Activated CD8-positive, alpha-beta T cell treated with anti-CD3 and anti-CD28 coated beads for 36 hours (primary cell): ENCODE measurements at regions of chr17 and their contacts with region 1.

Region 1: GRCh38 chr17:28644985-28645939 is at the start of gene BLTP2:
- DNase-seq: peak; percentile 96
- ATAC-seq: peak; percentile 99
- H3K4me3 Mint-ChIP-seq: peak within 1 kb of the TSS; percentile 86
- H3K27ac Mint-ChIP-seq: peak within 1 kb of the TSS; percentile 84
- H3K4me1 Mint-ChIP-seq: peaks cover 40% of the 10 kb centered on the region
- H3K27me3 Mint-ChIP-seq: no peaks in the 10 kb centered on the region
- CTCF ChIP-seq: no peak
- total RNA-seq, gene BLTP2: 137 to 140 TPM

Region 2: DNA sequence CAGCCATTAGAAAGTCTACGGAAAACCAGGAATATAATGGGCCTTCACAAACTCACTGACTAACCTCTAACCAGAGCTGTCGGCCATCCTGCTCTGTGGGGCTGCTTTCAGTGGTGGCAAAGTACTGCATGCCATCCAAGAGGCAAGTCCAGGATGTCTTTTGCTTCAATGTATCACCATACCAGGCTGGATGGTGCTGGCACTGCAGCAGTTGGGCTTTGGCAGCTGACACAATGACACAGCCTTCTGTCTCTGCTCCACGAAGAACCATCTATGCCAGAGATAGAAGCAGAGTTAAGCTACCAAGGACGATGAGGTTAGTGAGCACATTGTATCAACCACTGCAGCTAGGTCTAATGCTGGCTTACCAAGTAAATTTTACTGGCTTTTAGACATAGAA is 21.6 kb before region 1 on chr17:
- CTCF ChIA-PET with region 1: interaction called, 11 read pairs
- POLR2A ChIA-PET with region 1: interaction called, 5 read pairs
- intact Hi-C with region 1: no loop called
- DNase-seq: no peak
- ATAC-seq: no peak
- H3K4me3 Mint-ChIP-seq: no peak overlapping the region
- H3K27ac Mint-ChIP-seq: no peak overlapping the region
- H3K4me1 Mint-ChIP-seq: peaks cover 3% of the 10 kb centered on the region
- H3K27me3 Mint-ChIP-seq: no peaks in the 10 kb centered on the region
- CTCF ChIP-seq: no peak

Region 3: DNA sequence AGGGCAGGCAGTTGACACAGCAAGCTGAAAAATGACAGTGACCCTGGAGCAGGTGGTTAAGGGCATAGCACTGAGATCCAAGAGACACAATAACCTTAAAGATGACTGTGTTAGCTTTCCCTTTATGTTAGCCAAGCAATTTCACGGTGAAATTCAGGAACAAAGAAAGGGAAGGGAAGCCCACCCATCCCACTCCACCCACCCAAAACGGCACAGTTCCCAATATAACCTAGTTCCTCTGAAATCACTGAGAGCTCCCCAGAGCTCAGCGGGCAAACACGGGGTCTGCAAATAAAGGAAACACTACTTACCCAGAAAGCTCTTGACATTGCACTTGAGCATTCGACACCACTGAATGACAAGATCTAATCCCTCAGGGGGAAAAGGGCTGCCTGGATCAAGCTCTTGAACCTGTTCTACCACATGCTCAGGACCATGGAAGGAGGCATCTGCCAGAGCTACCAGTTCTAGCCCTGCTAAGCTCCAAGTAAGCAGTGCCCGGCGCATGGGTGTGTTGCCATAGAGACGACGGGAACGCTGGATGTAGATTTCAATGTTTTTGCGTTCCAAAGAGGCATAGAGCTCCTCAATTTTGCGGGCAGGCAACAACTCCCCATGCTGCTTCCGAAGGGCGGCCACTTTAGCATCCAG is 10.9 kb before region 1 on chr17:
- CTCF ChIA-PET with region 1: interaction called, 21 read pairs
- POLR2A ChIA-PET with region 1: interaction called, 22 read pairs
- intact Hi-C with region 1: no loop called
- DNase-seq: no peak
- ATAC-seq: no peak
- H3K4me3 Mint-ChIP-seq: no peak overlapping the region
- H3K27ac Mint-ChIP-seq: no peak overlapping the region
- H3K4me1 Mint-ChIP-seq: peaks cover 21% of the 10 kb centered on the region
- H3K27me3 Mint-ChIP-seq: no peaks in the 10 kb centered on the region
- CTCF ChIP-seq: no peak

Region 4: GRCh38 chr17:28661635-28662537 is 16.6 kb after region 1 on chr17 and contains the starts of genes SDF2 and SUPT6H:
- CTCF ChIA-PET with region 1: interaction called, 83 read pairs
- POLR2A ChIA-PET with region 1: interaction called, 60 read pairs
- intact Hi-C with region 1: no loop called
- DNase-seq: peak; percentile 98
- ATAC-seq: peak; percentile 87
- H3K4me3 Mint-ChIP-seq: peak within 1 kb of the TSS; percentile 97
- H3K27ac Mint-ChIP-seq: peak within 1 kb of the TSS; percentile 100
- H3K4me1 Mint-ChIP-seq: peaks cover 45% of the 10 kb centered on the region
- H3K27me3 Mint-ChIP-seq: no peaks in the 10 kb centered on the region
- CTCF ChIP-seq: no peak
- total RNA-seq, gene SDF2: 37.4 to 39.0 TPM
- total RNA-seq, gene SUPT6H: 60.3 to 63.3 TPM

Region 5: GRCh38 chr17:28669918-28670317 is 24.7 kb after region 1 on chr17:
- CTCF ChIA-PET with region 1: interaction called, 66 read pairs
- POLR2A ChIA-PET with region 1: interaction called, 3 read pairs
- intact Hi-C with region 1: no loop called
- DNase-seq: no peak
- ATAC-seq: no peak
- H3K4me3 Mint-ChIP-seq: no peak overlapping the region
- H3K27ac Mint-ChIP-seq: no peak overlapping the region
- H3K4me1 Mint-ChIP-seq: peaks cover 17% of the 10 kb centered on the region
- H3K27me3 Mint-ChIP-seq: no peaks in the 10 kb centered on the region
- CTCF ChIP-seq: no peak

Region 6: GRCh38 chr17:28675980-28676379 is 30.7 kb after region 1 on chr17:
- CTCF ChIA-PET with region 1: interaction called, 66 read pairs
- POLR2A ChIA-PET with region 1: interaction called, 11 read pairs
- intact Hi-C with region 1: no loop called
- DNase-seq: peak; percentile 24
- ATAC-seq: peak; percentile 27
- H3K4me3 Mint-ChIP-seq: no peak overlapping the region
- H3K27ac Mint-ChIP-seq: no peak overlapping the region
- H3K4me1 Mint-ChIP-seq: no peaks in the 10 kb centered on the region
- H3K27me3 Mint-ChIP-seq: no peaks in the 10 kb centered on the region
- CTCF ChIP-seq: no peak

Region 7: GRCh38 chr17:28710861-28711722 is 65.8 kb after region 1 on chr17:
- CTCF ChIA-PET with region 1: interaction called, 14 read pairs
- POLR2A ChIA-PET with region 1: interaction called, 11 read pairs
- intact Hi-C with region 1: no loop called
- DNase-seq: peak; percentile 92
- ATAC-seq: peak; percentile 92
- H3K4me3 Mint-ChIP-seq: peak overlapping the region; percentile 89
- H3K27ac Mint-ChIP-seq: peak overlapping the region; percentile 95
- H3K4me1 Mint-ChIP-seq: peaks cover 13% of the 10 kb centered on the region
- H3K27me3 Mint-ChIP-seq: peaks cover 9% of the 10 kb centered on the region
- CTCF ChIP-seq: no peak